WTC11 (cell line): ENCODE measurements at regions of chr7 and their contacts with region 1.

Region 1: GRCh38 chr7:128387216-128388144 is 22.3 kb downstream of the IMPDH1 start:
- DNase-seq: peak; percentile 94
- ATAC-seq: peak; percentile 88
- H3K4me3 Mint-ChIP-seq: no peak overlapping the region
- H3K27ac Mint-ChIP-seq: no peak overlapping the region
- H3K4me1 Mint-ChIP-seq: peaks cover 13% of the 10 kb centered on the region
- H3K27me3 Mint-ChIP-seq: peaks cover 25% of the 10 kb centered on the region
- CTCF ChIP-seq: peak; percentile 73

Region 2: DNA sequence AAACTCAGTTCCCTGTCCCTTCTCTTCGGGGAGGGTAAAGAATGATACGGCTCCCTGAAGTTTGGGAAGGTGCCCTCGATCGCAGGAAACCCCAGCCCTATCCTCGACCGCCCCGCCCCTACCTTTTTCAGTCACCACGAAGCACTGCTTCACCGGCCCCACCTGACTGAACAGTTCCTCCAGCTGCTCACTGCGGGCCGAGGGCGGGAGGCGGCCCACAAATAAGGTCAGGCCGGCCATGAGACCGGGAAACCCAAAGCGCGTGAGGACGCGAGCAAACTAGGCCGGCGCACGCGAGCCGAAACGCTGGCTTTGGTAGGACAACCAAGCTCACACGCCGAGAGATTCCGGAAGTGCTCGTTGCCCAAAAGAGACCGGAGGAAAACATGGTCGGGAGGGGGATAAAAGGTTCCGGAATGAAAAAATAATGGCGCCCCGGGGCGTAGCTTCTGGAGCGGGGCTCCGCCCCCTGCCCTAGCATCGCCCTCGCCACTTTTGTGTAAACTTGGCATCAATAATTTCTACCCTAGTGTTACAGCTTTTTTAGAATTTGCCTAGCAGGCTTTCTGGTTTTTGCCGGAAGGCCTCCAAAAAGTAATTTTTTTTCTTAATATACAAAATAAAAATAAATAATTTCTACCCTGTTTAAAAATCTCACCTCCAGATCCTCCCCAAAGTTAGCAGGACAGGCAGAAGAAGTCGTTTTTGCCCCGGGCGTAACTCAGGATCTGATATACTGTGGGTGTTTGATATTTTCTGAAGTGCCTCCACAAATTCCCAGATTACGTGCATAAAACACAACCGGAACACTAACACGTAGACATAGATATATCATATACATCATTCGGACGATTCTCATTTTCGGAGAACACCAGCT is 43.7 kb before region 1 on chr7 and contains the start of gene RBM28:
- CTCF ChIA-PET with region 1: interaction called, 138 read pairs
- POLR2A ChIA-PET with region 1: no interaction called
- DNase-seq: peak; percentile 81
- ATAC-seq: peak; percentile 92
- H3K4me3 Mint-ChIP-seq: peak within 1 kb of the TSS; percentile 91
- H3K27ac Mint-ChIP-seq: peak within 1 kb of the TSS; percentile 91
- H3K4me1 Mint-ChIP-seq: peaks cover 11% of the 10 kb centered on the region
- H3K27me3 Mint-ChIP-seq: peaks cover 20% of the 10 kb centered on the region
- CTCF ChIP-seq: no peak
- total RNA-seq, gene RBM28: 51.5 to 66.1 TPM (median 56.2 TPM) in 3 replicates

Region 3: GRCh38 chr7:128352153-128352537 is 35.3 kb before region 1 on chr7:
- CTCF ChIA-PET with region 1: interaction called, 138 read pairs
- POLR2A ChIA-PET with region 1: interaction called, 3 read pairs
- DNase-seq: peak; percentile 88
- ATAC-seq: peak; percentile 82
- H3K4me3 Mint-ChIP-seq: no peak overlapping the region
- H3K27ac Mint-ChIP-seq: no peak overlapping the region
- H3K4me1 Mint-ChIP-seq: peaks cover 6% of the 10 kb centered on the region
- H3K27me3 Mint-ChIP-seq: peaks cover 84% of the 10 kb centered on the region
- CTCF ChIP-seq: peak; percentile 63

Region 4: DNA sequence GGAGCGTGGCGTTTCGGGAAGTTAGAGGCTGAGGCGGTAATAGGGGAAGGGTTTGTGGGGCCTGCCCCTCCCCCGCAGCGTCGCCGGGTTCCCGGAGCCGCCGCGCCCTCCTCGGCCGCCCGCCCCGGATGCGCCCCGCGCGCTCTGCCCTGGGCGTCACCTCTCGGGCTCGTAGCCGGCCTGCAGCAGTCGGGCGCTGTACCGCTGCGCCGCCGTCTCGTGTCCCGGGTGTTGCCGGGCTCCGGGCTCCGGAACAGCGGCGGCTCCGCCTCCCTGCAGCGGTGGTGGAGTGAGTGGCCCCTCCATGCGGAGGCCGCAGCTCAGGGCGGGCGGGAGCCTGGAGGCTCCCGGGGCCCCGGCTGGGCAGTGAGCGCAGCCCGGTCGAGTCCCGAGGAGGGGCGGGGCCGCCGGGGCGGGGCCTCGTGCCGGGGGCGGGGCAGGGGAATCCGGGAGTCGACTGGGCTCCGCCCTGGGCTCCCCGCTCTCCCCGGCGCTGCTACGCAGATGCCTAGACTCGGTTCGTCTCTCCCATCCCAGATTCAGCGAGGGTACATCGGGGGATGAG is 22.2 kb after region 1 on chr7 and contains the start of gene IMPDH1:
- CTCF ChIA-PET with region 1: interaction called, 12 read pairs
- POLR2A ChIA-PET with region 1: no interaction called
- DNase-seq: peak; percentile 92
- ATAC-seq: peak; percentile 82
- H3K4me3 Mint-ChIP-seq: peak within 1 kb of the TSS; percentile 91
- H3K27ac Mint-ChIP-seq: no peak within 1 kb of the TSS; the same call in 1 of the 2 replicates
- H3K4me1 Mint-ChIP-seq: peaks cover 29% of the 10 kb centered on the region
- H3K27me3 Mint-ChIP-seq: peaks cover 86% of the 10 kb centered on the region
- CTCF ChIP-seq: no peak
- total RNA-seq, gene IMPDH1: 42.8 to 54.2 TPM (median 44.1 TPM) in 3 replicates

Region 5: GRCh38 chr7:129188372-129188891 is 801.0 kb after region 1 on chr7 and contains the start of gene SMO:
- CTCF ChIA-PET with region 1: no interaction called
- POLR2A ChIA-PET with region 1: no interaction called
- DNase-seq: peak; percentile 90
- ATAC-seq: peak; percentile 85
- H3K4me3 Mint-ChIP-seq: peak within 1 kb of the TSS; percentile 96
- H3K27ac Mint-ChIP-seq: peak within 1 kb of the TSS; percentile 53; the same call in 1 of the 2 replicates
- H3K4me1 Mint-ChIP-seq: peaks cover 41% of the 10 kb centered on the region
- H3K27me3 Mint-ChIP-seq: peaks cover 30% of the 10 kb centered on the region
- CTCF ChIP-seq: no peak
- total RNA-seq, gene SMO: 56.9 to 61.4 TPM (median 60.3 TPM) in 3 replicates